Activated CD4-positive, alpha-beta memory T cell treated with anti-CD3 and anti-CD28 coated beads for 36 hours (primary cell): ENCODE measurements at regions of chr14 and their contacts with region 1.

Region 1: DNA sequence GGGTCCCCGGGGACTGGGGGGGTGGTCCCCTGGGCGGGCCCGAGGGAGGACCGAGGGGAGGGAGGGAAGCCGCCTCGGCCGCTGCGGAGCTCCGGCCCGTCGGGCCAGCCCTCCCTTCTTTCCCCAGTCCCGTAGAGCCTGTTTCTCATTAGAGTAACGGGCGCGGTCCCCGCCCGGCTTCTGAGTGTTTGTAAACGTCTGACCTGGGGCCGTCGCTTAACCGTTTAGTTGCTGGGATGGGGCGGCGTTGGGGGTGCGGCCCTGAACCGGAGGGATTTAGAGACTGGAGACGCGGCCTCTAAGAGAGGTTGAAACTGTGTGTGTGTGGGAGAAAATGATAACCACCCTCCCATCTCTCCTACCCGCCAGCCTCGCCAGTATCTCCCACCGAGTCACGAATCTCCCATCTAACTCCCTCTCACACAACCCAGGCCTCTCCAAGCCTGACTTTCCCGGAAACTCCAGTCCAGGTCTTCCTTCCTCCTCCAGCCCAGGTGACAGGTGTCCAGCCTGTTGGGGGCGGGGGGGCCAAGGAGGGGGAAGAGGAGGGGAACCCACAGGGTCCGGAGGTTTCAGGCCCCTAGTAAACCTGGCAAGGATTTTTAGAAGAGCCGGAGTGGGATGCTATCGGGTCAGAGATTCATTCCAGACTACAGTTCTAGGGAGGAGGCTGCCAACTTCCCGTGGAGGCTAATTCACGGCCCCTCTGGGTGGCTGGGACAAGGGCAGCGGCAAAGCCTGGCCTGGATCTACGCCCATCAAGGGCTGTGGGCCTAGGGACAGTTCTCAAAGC is 1.1 kb upstream of the NFATC4 start:
- DNase-seq: peak; percentile 34
- H3K4me3 Mint-ChIP-seq: peak overlapping the region; percentile 55
- H3K27ac Mint-ChIP-seq: no peak overlapping the region
- H3K4me1 Mint-ChIP-seq: peaks cover 24% of the 10 kb centered on the region
- H3K27me3 Mint-ChIP-seq: peaks cover 39% of the 10 kb centered on the region

Region 2: GRCh38 chr14:24411443-24412389 is 44.8 kb after region 1 on chr14:
- CTCF ChIA-PET with region 1: interaction called, 10 read pairs
- POLR2A ChIA-PET with region 1: no interaction called
- intact Hi-C with region 1: no loop called
- DNase-seq: peak; percentile 45
- H3K4me3 Mint-ChIP-seq: no peak overlapping the region
- H3K27ac Mint-ChIP-seq: no peak overlapping the region
- H3K4me1 Mint-ChIP-seq: no peaks in the 10 kb centered on the region
- H3K27me3 Mint-ChIP-seq: peaks cover 1% of the 10 kb centered on the region

Region 3: DNA sequence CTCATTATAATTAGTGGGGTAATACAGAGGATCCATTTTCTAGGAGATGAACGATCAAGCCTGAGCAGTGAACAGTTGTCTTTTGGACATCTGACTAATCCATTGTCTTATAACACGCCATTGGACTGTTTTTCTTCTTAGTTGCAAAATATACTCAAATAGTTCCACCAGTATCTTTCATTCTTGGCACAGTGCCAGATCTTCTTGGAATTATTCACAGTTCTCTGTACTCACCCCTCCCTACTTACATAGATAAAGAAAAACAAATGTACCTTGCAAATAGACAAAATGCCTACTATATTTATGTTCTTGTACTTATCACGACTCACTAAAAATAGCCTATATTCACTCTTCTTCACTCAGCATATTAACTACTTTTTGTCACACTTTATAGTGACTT is 58.8 kb after region 1 on chr14:
- CTCF ChIA-PET with region 1: interaction called, 129 read pairs
- POLR2A ChIA-PET with region 1: interaction called, 19 read pairs
- intact Hi-C with region 1: no loop called
- DNase-seq: peak; percentile 3
- H3K4me3 Mint-ChIP-seq: no peak overlapping the region
- H3K27ac Mint-ChIP-seq: peak overlapping the region; percentile 70
- H3K4me1 Mint-ChIP-seq: peaks cover 33% of the 10 kb centered on the region
- H3K27me3 Mint-ChIP-seq: no peaks in the 10 kb centered on the region